ENCODE measurements at regions of chr5 and their contacts with region 1.

Region 1: DNA sequence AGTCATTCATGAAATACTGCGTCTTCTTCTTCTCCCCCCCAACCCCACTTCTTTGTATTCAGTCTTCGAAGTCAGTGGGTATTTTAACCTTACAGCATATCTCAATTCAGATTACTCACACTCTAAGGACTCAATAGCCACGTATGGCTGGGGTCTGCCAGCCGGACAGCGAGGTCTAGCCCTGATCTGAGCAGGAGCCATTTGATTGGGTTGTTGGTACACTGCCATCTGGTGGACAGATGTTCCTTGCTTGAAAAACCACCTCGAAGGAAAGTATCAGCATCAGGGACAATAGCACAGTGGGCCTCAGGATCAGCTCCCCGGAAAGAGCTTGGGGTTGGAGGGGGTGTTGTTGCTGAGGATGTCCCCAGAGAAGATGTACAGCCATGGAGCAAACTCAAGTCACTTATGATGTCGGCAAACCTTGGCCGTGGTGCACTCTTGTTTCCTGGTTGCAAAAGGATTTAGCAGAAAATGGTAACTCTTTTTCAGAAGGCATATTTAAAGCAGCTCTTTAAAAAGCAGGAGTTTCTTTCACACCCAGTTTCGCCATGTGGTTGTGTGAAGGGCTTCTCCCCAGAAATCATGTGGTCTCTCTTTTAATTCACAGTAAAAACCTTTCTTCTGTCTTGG is 31.7 kb upstream of the KCNMB1 start:
- DNase-seq: peak; percentile 78
- H3K4me3 Mint-ChIP-seq: no peak overlapping the region
- H3K27ac Mint-ChIP-seq: no peak overlapping the region
- H3K4me1 Mint-ChIP-seq: peaks cover 17% of the 10 kb centered on the region
- H3K27me3 Mint-ChIP-seq: peaks cover 86% of the 10 kb centered on the region
- CTCF ChIP-seq: peak; percentile 78

Region 2: GRCh38 chr5:170100066-170100943 is 320.6 kb before region 1 on chr5:
- CTCF ChIA-PET with region 1: no interaction called
- intact Hi-C with region 1: loop called (anchors 1 kb)
- DNase-seq: peak; percentile 83
- H3K4me3 Mint-ChIP-seq: no peak overlapping the region
- H3K27ac Mint-ChIP-seq: no peak overlapping the region
- H3K4me1 Mint-ChIP-seq: peaks cover 5% of the 10 kb centered on the region
- H3K27me3 Mint-ChIP-seq: peaks cover 59% of the 10 kb centered on the region
- CTCF ChIP-seq: peak; percentile 80

Region 3: GRCh38 chr5:170225326-170226128 is 195.4 kb before region 1 on chr5:
- CTCF ChIA-PET with region 1: interaction called, 9 read pairs
- intact Hi-C with region 1: loop called (anchors 1 kb)
- DNase-seq: peak; percentile 83
- H3K4me3 Mint-ChIP-seq: no peak overlapping the region
- H3K27ac Mint-ChIP-seq: no peak overlapping the region
- H3K4me1 Mint-ChIP-seq: no peaks in the 10 kb centered on the region
- H3K27me3 Mint-ChIP-seq: peaks cover 17% of the 10 kb centered on the region
- CTCF ChIP-seq: peak; percentile 86

Region 4: DNA sequence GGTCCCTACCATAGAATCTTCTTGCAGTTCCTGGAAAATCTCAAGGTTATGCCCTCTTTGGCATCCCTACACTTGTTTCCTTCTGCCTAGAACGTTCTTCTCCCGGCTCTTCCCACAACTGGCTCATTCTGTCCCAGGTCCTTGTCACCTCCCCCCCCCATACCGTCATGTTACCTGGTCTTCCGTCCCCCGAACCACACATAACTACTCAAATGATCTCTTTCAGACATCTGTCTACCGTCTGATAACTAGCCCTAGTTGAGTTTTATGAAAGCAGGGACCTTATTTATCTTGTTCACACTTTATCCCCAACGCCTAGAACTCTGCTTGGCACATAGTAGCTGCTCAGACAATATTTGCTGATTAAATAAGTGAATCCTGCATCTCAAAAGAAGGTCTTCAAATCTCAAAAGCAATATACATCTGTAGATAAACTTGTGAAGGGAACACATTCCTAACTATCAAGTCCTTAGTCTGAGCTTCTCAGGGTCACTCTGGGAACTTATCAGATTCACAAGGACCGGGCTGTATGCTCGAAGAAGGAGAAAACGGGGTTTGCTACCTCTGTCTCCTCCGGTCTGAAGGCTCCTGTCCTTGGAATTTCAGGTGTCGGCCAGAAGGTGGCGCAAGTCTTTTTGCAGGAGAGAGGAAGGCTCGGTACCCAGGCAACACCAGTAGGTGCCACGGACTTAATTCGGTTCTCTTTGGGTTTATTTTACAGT is 153.3 kb before region 1 on chr5:
- CTCF ChIA-PET with region 1: interaction called, 10 read pairs
- intact Hi-C with region 1: loop called (anchors 2 kb)
- DNase-seq: peak; percentile 82
- H3K4me3 Mint-ChIP-seq: no peak overlapping the region
- H3K27ac Mint-ChIP-seq: no peak overlapping the region
- H3K4me1 Mint-ChIP-seq: peaks cover 14% of the 10 kb centered on the region
- H3K27me3 Mint-ChIP-seq: peaks cover 70% of the 10 kb centered on the region
- CTCF ChIP-seq: peak; percentile 82

Region 5: GRCh38 chr5:170273945-170274710 is 146.8 kb before region 1 on chr5:
- CTCF ChIA-PET with region 1: no interaction called
- intact Hi-C with region 1: loop called (anchors 1 kb)
- DNase-seq: peak; percentile 50
- H3K4me3 Mint-ChIP-seq: no peak overlapping the region
- H3K27ac Mint-ChIP-seq: no peak overlapping the region
- H3K4me1 Mint-ChIP-seq: no peaks in the 10 kb centered on the region
- H3K27me3 Mint-ChIP-seq: peaks cover 41% of the 10 kb centered on the region
- CTCF ChIP-seq: peak; percentile 12

Region 6: DNA sequence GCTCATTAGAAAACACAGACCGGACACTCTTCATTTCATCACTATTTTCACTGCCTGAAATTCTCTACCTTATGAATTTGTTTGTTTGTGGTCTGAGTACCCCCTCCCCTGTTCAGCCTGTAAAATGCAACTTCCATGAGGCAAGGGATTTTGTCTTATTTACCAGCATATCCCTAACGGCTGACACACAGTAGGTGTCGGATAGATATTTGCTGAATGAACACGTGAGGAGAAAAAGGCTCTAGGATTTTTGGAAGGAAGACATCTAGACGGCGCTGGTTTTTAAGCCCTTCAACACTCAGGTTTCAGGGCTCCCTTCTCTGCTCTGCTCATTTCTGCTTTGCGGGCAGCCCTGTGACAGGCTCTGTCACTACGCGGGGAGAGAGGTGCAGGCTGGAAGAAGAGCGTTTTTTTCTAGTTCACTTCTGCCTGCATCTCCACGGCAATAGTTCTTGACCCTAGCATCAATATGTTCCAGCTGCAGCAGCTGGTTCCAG is 72.7 kb before region 1 on chr5:
- CTCF ChIA-PET with region 1: no interaction called
- intact Hi-C with region 1: loop called (anchors 5 kb)
- DNase-seq: no peak
- H3K4me3 Mint-ChIP-seq: no peak overlapping the region
- H3K27ac Mint-ChIP-seq: no peak overlapping the region
- H3K4me1 Mint-ChIP-seq: no peaks in the 10 kb centered on the region
- H3K27me3 Mint-ChIP-seq: peaks cover 100% of the 10 kb centered on the region
- CTCF ChIP-seq: no peak

Measured in Calu3 (cell line).